HCT116 (cell line): ENCODE measurements at regions of chr7 and their contacts with region 1.

Region 1: DNA sequence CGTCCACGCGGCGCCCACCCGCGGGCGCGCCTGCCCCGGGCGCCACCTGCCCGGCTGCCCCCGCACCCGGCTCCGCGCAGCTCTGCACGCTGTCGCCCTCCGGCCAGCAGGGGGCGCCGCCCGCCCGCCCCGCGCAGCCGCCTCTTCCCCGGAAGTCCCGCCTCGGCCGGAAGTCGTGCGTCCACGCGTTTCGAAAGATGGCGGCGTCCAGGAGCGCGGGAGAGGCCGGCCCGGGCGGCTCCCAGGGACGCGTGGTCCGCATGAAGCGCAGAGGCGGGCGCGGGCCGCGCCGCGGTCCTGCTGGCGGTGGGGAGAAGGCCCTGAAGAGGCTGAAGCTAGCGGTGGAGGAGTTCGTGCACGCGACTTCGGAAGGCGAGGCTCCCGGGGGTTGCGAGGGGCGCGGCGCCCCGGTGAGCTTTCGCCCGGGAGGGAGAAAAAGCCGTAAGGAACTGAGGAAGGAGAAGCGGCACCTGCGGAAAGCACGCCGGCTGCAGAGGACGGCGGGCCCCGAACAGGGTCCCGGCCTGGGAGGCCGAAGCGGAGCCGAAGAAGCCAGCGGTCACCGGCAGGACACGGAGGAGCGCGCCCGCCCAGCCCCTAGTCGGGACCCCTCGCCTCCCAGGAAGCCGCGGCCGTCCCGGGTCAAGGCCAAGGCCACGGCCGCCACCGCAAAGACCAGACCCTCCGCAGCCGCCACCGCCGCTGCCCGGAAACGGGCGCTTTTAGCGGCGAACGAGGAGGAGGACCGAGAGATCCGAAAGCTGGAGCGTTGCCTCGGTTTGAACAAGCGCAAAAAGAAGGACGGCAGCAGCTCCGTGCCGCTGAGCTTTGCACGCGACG is at the start of gene NOM1:
- DNase-seq: peak; percentile 56
- ATAC-seq: peak; percentile 85
- H3K4me3 ChIP-seq: peak within 1 kb of the TSS; percentile 90 to 95
- H3K27ac ChIP-seq: peak within 1 kb of the TSS; percentile 78
- H3K4me1 ChIP-seq: peaks cover 6 to 34% of the 10 kb centered on the region in 2 experiments
- H3K27me3 ChIP-seq: no peaks in the 10 kb centered on the region
- CTCF ChIP-seq: peak; percentile 46 to 76 (median 50); a peak in 5 of 6 replicates
- POLR2A ChIP-seq: peak; percentile 59
- RAD21 ChIP-seq: peak; percentile 42
- total RNA-seq, gene NOM1: 35.4 TPM

Region 2: DNA sequence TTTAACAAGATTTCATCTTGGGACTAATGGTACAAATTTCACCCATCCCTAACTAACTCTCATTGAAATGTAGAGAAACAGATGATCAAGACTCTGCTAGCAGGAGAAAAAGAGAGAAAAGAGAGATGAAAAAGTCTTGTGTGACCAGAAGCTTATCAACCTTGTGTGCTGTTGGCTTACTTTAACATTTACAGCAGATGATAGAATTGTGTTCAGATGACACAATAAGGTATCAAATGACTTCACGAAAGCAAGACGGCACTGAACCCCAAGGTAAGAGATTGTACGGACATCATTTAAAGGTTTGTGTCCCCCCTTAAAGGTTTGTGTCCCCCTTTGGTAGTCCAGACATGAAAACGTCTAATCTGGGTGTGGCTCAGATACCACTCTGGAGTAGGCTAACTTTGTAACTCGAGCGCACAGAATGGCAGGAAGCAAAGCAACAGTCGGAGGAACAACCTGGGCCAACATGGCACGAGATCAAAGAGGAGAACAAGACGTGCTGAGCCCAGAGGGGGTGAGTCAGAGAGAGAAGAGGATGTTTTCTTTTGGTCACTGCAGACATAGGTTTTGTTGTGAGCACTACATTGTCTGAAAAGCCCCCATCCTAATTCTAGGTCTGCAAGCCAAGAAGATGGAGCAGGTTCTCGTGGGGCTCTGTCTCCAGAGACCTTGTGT is 46.4 kb before region 1 on chr7:
- CTCF ChIA-PET with region 1: no interaction called
- POLR2A ChIA-PET with region 1: interaction called, 3 read pairs
- RAD21 ChIA-PET with region 1: no interaction called
- intact Hi-C with region 1: loop called (anchors 5 kb)
- DNase-seq: peak; percentile 89
- ATAC-seq: peak; percentile 91
- H3K4me3 ChIP-seq: peak overlapping the region; percentile 8 to 45
- H3K27ac ChIP-seq: peak overlapping the region; percentile 54
- H3K4me1 ChIP-seq: peaks cover 30 to 61% of the 10 kb centered on the region in 2 experiments
- H3K27me3 ChIP-seq: no peaks in the 10 kb centered on the region
- CTCF ChIP-seq: no peak
- POLR2A ChIP-seq: no peak
- RAD21 ChIP-seq: no peak

Region 3: DNA sequence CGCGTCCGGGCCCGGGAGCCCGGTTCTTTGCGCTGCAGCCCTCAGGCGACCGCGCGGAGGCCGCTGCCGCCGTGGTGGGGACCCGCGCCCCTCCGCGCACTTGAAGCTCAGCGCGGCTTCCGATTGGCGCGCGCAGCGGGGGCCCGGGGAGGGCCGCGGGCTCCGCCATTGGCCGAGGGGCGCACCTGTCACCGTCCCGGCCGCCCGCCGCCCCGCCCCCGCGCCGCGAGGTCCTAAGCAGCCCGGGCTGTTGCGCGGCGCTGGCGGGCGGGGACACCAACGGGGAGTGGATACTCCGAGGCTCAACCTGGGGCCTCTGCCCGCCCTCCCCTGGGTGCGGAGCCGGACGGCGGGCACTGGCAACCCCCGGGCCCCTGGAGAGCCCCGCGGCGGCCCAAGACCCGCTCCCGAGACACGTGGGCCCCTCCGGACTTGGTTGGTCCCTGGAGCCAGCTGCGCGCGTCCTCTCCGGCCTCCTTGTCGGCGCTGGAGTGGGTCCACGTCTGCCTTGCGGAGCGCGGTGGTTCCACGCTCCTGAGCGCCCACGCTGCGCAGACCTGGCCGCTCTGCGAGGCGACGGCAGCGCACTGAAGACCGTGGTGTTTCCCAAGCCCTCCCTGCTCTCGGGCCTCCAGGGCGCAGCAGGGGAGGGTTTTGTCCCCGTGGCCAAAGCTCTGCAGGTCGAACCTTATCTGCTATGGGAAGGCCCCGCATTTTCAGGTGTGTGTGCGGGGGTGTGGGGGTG is 61.0 kb after region 1 on chr7 and contains the start of gene MNX1:
- CTCF ChIA-PET with region 1: no interaction called
- POLR2A ChIA-PET with region 1: no interaction called
- RAD21 ChIA-PET with region 1: no interaction called
- intact Hi-C with region 1: loop called (anchors 2 kb)
- DNase-seq: peak; percentile 54
- ATAC-seq: peak; percentile 93
- H3K4me3 ChIP-seq: peak within 1 kb of the TSS; percentile 64 to 92
- H3K27ac ChIP-seq: peak within 1 kb of the TSS; percentile 79
- H3K4me1 ChIP-seq: peaks cover 14 to 28% of the 10 kb centered on the region in 2 experiments
- H3K27me3 ChIP-seq: no peaks in the 10 kb centered on the region
- CTCF ChIP-seq: no peak
- POLR2A ChIP-seq: no peak
- RAD21 ChIP-seq: no peak
- total RNA-seq, gene MNX1: 7.7 TPM

Region 4: DNA sequence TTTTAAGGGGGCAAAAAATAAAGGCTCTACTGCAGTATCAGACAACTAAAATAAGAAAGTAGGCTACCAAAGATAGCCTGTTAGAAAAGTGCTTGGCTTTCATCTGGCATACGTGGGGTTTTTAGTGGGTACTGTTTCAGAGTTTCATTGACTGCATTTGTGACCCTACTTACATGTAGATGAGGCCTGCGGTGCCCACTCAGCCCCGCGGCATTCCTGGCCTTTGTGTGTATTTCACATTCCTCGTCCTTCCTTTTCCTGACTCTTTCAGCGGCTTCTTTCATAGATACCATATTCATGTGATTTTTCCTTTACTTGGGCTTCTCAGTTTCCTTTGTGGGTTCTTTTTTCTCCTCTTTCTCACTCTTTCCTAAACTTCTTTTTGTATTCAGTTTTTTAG is 239.6 kb after region 1 on chr7:
- CTCF ChIA-PET with region 1: no interaction called
- POLR2A ChIA-PET with region 1: no interaction called
- RAD21 ChIA-PET with region 1: no interaction called
- intact Hi-C with region 1: no loop called
- DNase-seq: no peak
- ATAC-seq: no peak
- H3K4me3 ChIP-seq: no peak overlapping the region
- H3K27ac ChIP-seq: no peak overlapping the region
- H3K4me1 ChIP-seq: peaks cover 5 to 13% of the 10 kb centered on the region in 2 experiments; a peak in 3 of 4 replicates
- H3K27me3 ChIP-seq: no peaks in the 10 kb centered on the region
- CTCF ChIP-seq: no peak
- POLR2A ChIP-seq: no peak
- RAD21 ChIP-seq: no peak